Activated CD8-positive, alpha-beta T cell treated with anti-CD3 and anti-CD28 coated beads, Interleukin-2, amount 10 ng/mL, durations not matched to agents 7 days and 5 days (primary cell): ENCODE measurements at regions of chr2 and their contacts with region 1.

Region 1: DNA sequence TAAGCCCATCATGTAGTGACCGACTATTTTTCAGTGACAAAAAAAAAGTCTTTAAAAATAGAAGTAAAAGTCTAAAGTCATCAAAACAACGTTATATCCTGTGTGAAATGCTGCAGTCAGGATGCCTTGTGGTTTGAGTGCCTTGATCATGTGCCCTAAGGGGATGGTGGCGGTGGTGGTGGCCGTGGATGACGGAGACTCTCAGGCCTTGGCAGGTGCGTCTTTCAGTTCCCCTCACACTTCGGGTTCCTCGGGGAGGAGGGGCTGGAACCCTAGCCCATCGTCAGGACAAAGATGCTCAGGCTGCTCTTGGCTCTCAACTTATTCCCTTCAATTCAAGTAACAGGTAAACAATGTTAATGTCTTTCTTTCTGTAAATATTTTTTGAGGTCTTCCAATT is at the start of gene CD28:
- DNase-seq: peak; percentile 95
- ATAC-seq: peak; percentile 81
- H3K4me3 Mint-ChIP-seq: peak within 1 kb of the TSS; percentile 72
- H3K27ac Mint-ChIP-seq: peak within 1 kb of the TSS; percentile 87
- H3K4me1 Mint-ChIP-seq: peaks cover 66% of the 10 kb centered on the region
- H3K27me3 Mint-ChIP-seq: no peaks in the 10 kb centered on the region
- total RNA-seq, gene CD28: 25.6 to 27.2 TPM

Region 2: GRCh38 chr2:203718087-203718486 is 11.7 kb after region 1 on chr2:
- CTCF ChIA-PET with region 1: interaction called, 68 read pairs
- POLR2A ChIA-PET with region 1: interaction called, 84 read pairs
- DNase-seq: peak; percentile 89
- ATAC-seq: peak; percentile 84
- H3K4me3 Mint-ChIP-seq: peak overlapping the region; percentile 62
- H3K27ac Mint-ChIP-seq: peak overlapping the region; percentile 90
- H3K4me1 Mint-ChIP-seq: peaks cover 95% of the 10 kb centered on the region
- H3K27me3 Mint-ChIP-seq: no peaks in the 10 kb centered on the region

Region 3: GRCh38 chr2:203774760-203775159 is 68.4 kb after region 1 on chr2:
- CTCF ChIA-PET with region 1: no interaction called
- POLR2A ChIA-PET with region 1: no interaction called
- DNase-seq: no peak
- ATAC-seq: no peak
- H3K4me3 Mint-ChIP-seq: no peak overlapping the region
- H3K27ac Mint-ChIP-seq: no peak overlapping the region
- H3K4me1 Mint-ChIP-seq: peaks cover 6% of the 10 kb centered on the region
- H3K27me3 Mint-ChIP-seq: no peaks in the 10 kb centered on the region